ENCODE measurements at regions of chr11 and their contacts with region 1.

Region 1: GRCh38 chr11:118216621-118217481 is 8.0 kb downstream of the JAML start:
- DNase-seq: peak in 3 of 9 donors; percentile 19 to 60 (median 39)
- ATAC-seq: peak; percentile 71
- H3K4me3 ChIP-seq: peak overlapping the region; percentile 37
- H3K4me3 Mint-ChIP-seq: peak overlapping the region in 9 of 10 donors; percentile 78 to 87 (median 83)
- H3K27ac ChIP-seq: peak overlapping the region; percentile 64
- H3K27ac Mint-ChIP-seq: peak overlapping the region in 7 of 9 donors; percentile 84 to 96 (median 92)
- H3K4me1 ChIP-seq: peaks cover 62 to 89% of the 10 kb centered on the region in 2 donors
- H3K4me1 Mint-ChIP-seq: peaks cover 75 to 100% (median 98%) of the 10 kb centered on the region in 7 donors
- H3K27me3 ChIP-seq: no peaks in the 10 kb centered on the region
- H3K27me3 Mint-ChIP-seq: no peaks in the 10 kb centered on the region

Region 2: DNA sequence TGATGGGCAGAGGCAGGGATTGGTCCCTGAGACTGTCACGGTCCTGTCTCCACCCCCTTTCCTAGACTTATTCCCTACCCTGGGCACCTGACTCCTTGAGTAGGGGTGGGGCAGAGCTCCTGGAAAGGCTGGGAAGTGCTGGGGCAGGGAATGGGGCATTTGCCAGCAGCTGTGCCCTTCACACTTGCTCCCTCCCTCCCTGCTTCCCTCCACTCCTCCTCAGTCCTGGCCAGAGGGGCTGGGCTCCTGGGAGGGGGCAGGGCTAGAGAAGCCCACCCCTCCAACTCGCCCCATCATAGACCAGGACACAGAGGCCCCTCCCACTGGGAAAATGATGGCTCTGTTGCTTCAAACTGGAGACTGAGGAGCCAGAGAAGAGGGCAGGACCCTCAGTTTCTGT is 52.0 kb before region 1 on chr11:
- CTCF ChIA-PET with region 1: no interaction called
- POLR2A ChIA-PET with region 1: no interaction called
- intact Hi-C with region 1: no loop called
- DNase-seq: no peak
- ATAC-seq: no peak
- H3K4me3 ChIP-seq: no peak overlapping the region
- H3K4me3 Mint-ChIP-seq: no peak overlapping the region
- H3K27ac ChIP-seq: no peak overlapping the region
- H3K27ac Mint-ChIP-seq: no peak overlapping the region
- H3K4me1 ChIP-seq: no peaks in the 10 kb centered on the region
- H3K4me1 Mint-ChIP-seq: no peaks in the 10 kb centered on the region
- H3K27me3 ChIP-seq: no peaks in the 10 kb centered on the region
- H3K27me3 Mint-ChIP-seq: peaks cover 0 to 32% (median 5%) of the 10 kb centered on the region in 5 donors

Region 3: GRCh38 chr11:118206391-118207031 is 10.3 kb before region 1 on chr11:
- CTCF ChIA-PET with region 1: interaction called, 8 read pairs
- POLR2A ChIA-PET with region 1: interaction called, 14 read pairs
- intact Hi-C with region 1: loop called (anchors 1 kb)
- DNase-seq: peak in 1 of 9 donors; percentile 20
- ATAC-seq: peak; percentile 46
- H3K4me3 ChIP-seq: no peak overlapping the region
- H3K4me3 Mint-ChIP-seq: peak overlapping the region; percentile 20 to 82 (median 54)
- H3K27ac ChIP-seq: peak overlapping the region; percentile 44
- H3K27ac Mint-ChIP-seq: peak overlapping the region in 8 of 9 donors; percentile 61 to 94 (median 88)
- H3K4me1 ChIP-seq: peaks cover 38 to 45% of the 10 kb centered on the region in 2 donors
- H3K4me1 Mint-ChIP-seq: peaks cover 5 to 49% (median 13%) of the 10 kb centered on the region in 7 donors
- H3K27me3 ChIP-seq: no peaks in the 10 kb centered on the region
- H3K27me3 Mint-ChIP-seq: no peaks in the 10 kb centered on the region

Region 4: DNA sequence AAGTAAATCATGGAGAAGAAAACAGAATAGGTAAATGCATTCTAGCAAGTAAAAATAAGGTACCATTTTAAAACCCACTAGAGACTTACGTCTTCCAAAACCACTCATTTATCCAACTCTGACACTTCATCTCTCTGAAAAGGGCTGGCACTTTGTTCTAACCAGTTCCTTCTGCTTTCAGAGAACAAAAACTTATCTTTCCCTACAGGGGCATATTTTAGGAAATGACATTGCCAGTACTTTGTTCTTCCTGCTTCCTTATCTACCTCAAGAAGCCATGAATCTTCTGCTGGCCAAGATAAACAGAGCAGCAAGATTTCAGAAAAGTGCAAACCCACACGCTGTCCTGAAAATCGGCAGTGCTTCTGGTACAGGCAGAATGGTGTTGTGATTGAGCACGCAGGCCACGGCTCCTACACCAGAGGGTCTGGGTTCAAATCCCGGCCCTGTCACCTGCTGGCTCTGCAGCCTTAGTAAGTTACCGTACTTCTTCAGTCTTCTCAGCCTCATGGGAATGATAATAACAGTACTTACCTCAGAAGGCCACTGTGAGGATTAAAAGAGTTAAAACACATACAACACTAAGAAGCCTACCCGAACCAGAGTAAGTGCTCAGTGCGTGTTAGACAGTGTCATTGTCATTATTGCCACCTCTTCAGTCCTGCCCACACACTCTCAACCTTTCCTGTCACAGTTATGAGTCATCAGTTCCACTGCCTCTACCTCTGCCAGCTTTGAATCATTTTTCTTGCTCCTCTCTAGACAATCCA is 24.3 kb after region 1 on chr11:
- CTCF ChIA-PET with region 1: interaction called, 3 read pairs
- POLR2A ChIA-PET with region 1: interaction called, 6 read pairs
- intact Hi-C with region 1: loop called in 1 of 2 experiments (anchors 1 kb)
- DNase-seq: peak in 4 of 9 donors; percentile 45 to 75 (median 53)
- ATAC-seq: peak; percentile 91
- H3K4me3 ChIP-seq: peak overlapping the region; percentile 8
- H3K4me3 Mint-ChIP-seq: peak overlapping the region; percentile 27 to 74 (median 54)
- H3K27ac ChIP-seq: peak overlapping the region; percentile 49
- H3K27ac Mint-ChIP-seq: peak overlapping the region; percentile 52 to 93 (median 83)
- H3K4me1 ChIP-seq: peaks cover 33 to 50% of the 10 kb centered on the region in 2 donors
- H3K4me1 Mint-ChIP-seq: peaks cover 54 to 76% (median 70%) of the 10 kb centered on the region in 7 donors
- H3K27me3 ChIP-seq: no peaks in the 10 kb centered on the region
- H3K27me3 Mint-ChIP-seq: no peaks in the 10 kb centered on the region

Region 5: GRCh38 chr11:118277306-118277705 is 60.5 kb after region 1 on chr11:
- CTCF ChIA-PET with region 1: interaction called, 3 read pairs
- POLR2A ChIA-PET with region 1: interaction called, 3 read pairs
- intact Hi-C with region 1: loop called in 1 of 2 experiments (anchors 5 kb)
- DNase-seq: no peak
- ATAC-seq: no peak
- H3K4me3 ChIP-seq: no peak overlapping the region
- H3K4me3 Mint-ChIP-seq: no peak overlapping the region
- H3K27ac ChIP-seq: no peak overlapping the region
- H3K27ac Mint-ChIP-seq: no peak overlapping the region
- H3K4me1 ChIP-seq: peaks cover 0 to 5% of the 10 kb centered on the region in 2 donors
- H3K4me1 Mint-ChIP-seq: peaks cover 6 to 57% (median 30%) of the 10 kb centered on the region in 7 donors
- H3K27me3 ChIP-seq: no peaks in the 10 kb centered on the region
- H3K27me3 Mint-ChIP-seq: peaks cover 0 to 3% (median 0%) of the 10 kb centered on the region in 5 donors